Activated CD4-positive, alpha-beta T cell treated with anti-CD3 and anti-CD28 coated beads for 36 hours (primary cell): ENCODE measurements at regions of chrX and their contacts with region 1.

Region 1: GRCh38 chrX:71111141-71111843 is at the start of gene IL2RG:
- DNase-seq: peak; percentile 83
- ATAC-seq: peak; percentile 83
- H3K4me3 Mint-ChIP-seq: peak within 1 kb of the TSS; percentile 99
- H3K27ac Mint-ChIP-seq: peak within 1 kb of the TSS; percentile 99
- H3K4me1 Mint-ChIP-seq: peaks cover 39% of the 10 kb centered on the region
- H3K27me3 Mint-ChIP-seq: no peaks in the 10 kb centered on the region
- total RNA-seq, gene IL2RG: 278 to 342 TPM

Region 2: GRCh38 chrX:70527610-70528345 is 583.5 kb before region 1 on chrX:
- CTCF ChIA-PET with region 1: no interaction called
- POLR2A ChIA-PET with region 1: no interaction called
- intact Hi-C with region 1: no loop called
- DNase-seq: no peak
- ATAC-seq: no peak
- H3K4me3 Mint-ChIP-seq: no peak overlapping the region
- H3K27ac Mint-ChIP-seq: no peak overlapping the region
- H3K4me1 Mint-ChIP-seq: peaks cover 5% of the 10 kb centered on the region
- H3K27me3 Mint-ChIP-seq: no peaks in the 10 kb centered on the region

Region 3: DNA sequence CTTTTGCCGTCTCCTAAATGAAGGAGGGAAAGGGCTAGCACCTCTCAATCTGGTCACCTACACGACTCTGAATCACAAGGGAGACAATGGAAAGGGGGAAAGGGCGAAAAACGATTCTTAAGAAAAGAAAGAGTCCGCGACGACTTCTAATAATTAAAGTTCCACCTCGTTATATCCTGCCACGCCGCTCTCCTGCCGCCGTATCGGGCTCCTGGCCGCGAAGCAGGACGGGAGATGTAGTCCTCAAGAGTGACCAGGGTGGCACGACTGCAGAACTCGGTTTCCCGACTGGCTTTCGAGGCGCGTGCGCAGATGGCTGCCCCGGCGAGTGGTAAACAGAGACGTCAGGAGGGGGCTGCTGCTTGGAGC is 15.8 kb before region 1 on chrX and contains the start of gene FOXO4:
- CTCF ChIA-PET with region 1: interaction called, 22 read pairs
- POLR2A ChIA-PET with region 1: interaction called, 6 read pairs
- intact Hi-C with region 1: loop called (anchors 1 to 2 kb)
- DNase-seq: peak; percentile 92
- ATAC-seq: peak; percentile 93
- H3K4me3 Mint-ChIP-seq: peak within 1 kb of the TSS; percentile 89
- H3K27ac Mint-ChIP-seq: peak within 1 kb of the TSS; percentile 83
- H3K4me1 Mint-ChIP-seq: peaks cover 27% of the 10 kb centered on the region
- H3K27me3 Mint-ChIP-seq: no peaks in the 10 kb centered on the region
- total RNA-seq, gene FOXO4: 9.5 to 10.8 TPM

Region 4: GRCh38 chrX:71100620-71101510 is 10.4 kb before region 1 on chrX:
- CTCF ChIA-PET with region 1: interaction called, 22 read pairs
- POLR2A ChIA-PET with region 1: interaction called, 6 read pairs
- intact Hi-C with region 1: loop called (anchors 1 to 2 kb)
- DNase-seq: peak; percentile 50
- ATAC-seq: no peak
- H3K4me3 Mint-ChIP-seq: no peak overlapping the region
- H3K27ac Mint-ChIP-seq: peak overlapping the region; percentile 25
- H3K4me1 Mint-ChIP-seq: peaks cover 73% of the 10 kb centered on the region
- H3K27me3 Mint-ChIP-seq: no peaks in the 10 kb centered on the region

Region 5: DNA sequence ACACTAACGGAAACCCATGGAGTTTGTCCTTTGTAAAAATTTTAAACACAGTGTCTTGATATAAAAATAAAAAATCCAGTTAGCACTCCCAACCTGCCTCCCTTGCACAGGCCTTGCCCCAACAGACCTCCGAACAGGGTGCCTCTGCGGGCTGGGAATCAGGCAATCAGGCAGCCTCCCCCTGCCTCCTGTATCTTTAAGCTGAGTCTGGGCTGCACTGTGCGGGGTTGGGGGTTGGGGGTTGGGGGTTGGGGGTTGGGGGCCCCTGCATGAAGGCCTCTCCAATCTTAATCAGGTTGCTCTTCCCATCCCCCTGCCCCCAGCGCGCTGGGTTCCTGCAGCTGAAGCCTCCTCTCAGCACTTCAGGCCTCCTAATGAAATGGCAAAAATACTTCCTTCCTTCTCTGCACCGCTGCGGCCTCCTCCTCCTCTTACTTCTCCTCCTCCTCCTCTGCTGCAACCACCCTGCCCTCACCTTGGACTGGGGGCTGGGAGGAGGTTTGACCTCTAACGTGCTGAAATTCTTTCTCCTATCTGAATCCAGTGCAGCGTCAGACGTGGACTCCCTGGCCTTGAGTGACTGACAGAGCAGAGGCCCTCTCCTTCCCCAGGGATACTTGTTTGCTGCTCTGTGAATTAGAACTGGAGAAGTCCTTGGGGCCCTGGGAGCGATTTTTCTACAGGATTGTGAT is 60.0 kb after region 1 on chrX:
- CTCF ChIA-PET with region 1: no interaction called
- POLR2A ChIA-PET with region 1: no interaction called
- intact Hi-C with region 1: no loop called
- DNase-seq: no peak
- ATAC-seq: no peak
- H3K4me3 Mint-ChIP-seq: no peak overlapping the region
- H3K27ac Mint-ChIP-seq: no peak overlapping the region
- H3K4me1 Mint-ChIP-seq: peaks cover 9% of the 10 kb centered on the region
- H3K27me3 Mint-ChIP-seq: no peaks in the 10 kb centered on the region

Region 6: DNA sequence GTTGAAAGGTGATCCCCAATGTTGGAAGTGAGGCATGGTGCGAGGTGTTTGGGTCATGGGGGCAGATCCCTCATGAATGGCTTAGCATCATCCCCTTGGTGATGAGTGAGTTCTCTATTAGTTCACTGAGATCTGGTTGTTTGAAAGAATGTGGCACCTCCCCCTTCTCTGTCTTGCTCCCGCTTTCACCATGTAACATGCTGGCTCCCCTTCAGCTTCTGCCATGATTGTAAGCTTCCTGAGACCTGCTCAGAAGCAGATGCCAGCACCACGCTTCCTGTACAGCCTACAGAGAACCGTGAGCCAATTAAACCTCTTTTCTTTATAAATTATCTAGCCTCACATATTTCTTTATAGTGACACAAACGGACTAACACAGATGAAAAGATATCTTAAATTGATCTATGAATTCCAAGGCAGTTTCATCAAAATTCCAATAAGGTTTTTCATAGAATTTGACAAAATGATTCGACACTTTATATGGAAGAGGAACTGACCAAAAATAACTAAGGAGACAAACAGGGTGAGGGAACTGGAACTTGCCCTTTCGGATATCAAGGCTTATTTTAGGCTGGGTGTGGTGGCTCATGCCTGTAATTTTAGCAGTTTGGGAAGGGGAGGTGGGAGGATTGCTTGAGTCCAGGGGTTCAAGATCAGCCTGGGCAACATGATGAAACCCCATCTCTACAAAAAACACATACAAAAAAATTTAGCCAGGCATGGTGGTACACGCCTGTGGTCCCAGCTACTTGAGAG is 364.7 kb after region 1 on chrX:
- CTCF ChIA-PET with region 1: no interaction called
- POLR2A ChIA-PET with region 1: no interaction called
- intact Hi-C with region 1: no loop called
- DNase-seq: no peak
- ATAC-seq: no peak
- H3K4me3 Mint-ChIP-seq: no peak overlapping the region
- H3K27ac Mint-ChIP-seq: no peak overlapping the region
- H3K4me1 Mint-ChIP-seq: no peaks in the 10 kb centered on the region
- H3K27me3 Mint-ChIP-seq: no peaks in the 10 kb centered on the region

Region 7: DNA sequence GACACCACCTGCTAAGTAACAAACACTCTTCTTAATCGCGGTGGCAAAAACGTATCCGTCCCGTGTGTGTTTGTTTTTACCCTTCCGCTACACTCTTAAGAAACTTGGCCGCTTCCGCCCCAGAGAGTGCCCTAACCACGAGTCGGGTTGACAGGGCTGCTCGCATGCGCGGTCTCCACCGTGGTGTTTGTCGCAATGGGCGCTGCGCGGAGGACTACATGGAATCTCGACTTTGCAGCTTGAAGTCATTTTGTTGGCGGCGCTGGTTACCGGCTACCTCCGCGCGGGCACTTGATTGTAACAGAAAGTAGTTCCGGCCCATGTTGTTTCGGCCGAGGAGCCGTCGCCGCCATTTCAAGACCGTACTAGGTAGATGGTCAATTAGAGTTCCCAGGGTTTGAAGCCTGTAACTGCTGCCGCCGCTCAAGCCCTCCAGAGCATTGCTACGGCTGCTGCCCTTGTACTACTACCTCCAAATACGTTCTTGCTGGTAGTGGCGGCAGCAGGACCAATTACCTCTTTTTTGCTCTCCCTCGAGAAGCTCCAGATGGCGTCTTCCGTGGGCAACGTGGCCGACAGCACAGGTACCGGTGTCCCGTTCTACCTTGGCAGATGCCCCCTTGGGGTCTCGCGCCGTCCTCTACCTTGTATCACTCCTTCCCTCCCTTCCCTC is 421.6 kb after region 1 on chrX and contains the start of gene OGT:
- CTCF ChIA-PET with region 1: no interaction called
- POLR2A ChIA-PET with region 1: no interaction called
- intact Hi-C with region 1: loop called in 1 of 2 experiments (anchors 1 kb)
- DNase-seq: peak; percentile 96
- ATAC-seq: peak; percentile 76
- H3K4me3 Mint-ChIP-seq: peak within 1 kb of the TSS; percentile 96
- H3K27ac Mint-ChIP-seq: peak within 1 kb of the TSS; percentile 98
- H3K4me1 Mint-ChIP-seq: peaks cover 26% of the 10 kb centered on the region
- H3K27me3 Mint-ChIP-seq: no peaks in the 10 kb centered on the region
- total RNA-seq, gene OGT: 331 to 339 TPM